T-cell (primary cell): ENCODE measurements at regions of chr2 and their contacts with region 1.

Region 1: DNA sequence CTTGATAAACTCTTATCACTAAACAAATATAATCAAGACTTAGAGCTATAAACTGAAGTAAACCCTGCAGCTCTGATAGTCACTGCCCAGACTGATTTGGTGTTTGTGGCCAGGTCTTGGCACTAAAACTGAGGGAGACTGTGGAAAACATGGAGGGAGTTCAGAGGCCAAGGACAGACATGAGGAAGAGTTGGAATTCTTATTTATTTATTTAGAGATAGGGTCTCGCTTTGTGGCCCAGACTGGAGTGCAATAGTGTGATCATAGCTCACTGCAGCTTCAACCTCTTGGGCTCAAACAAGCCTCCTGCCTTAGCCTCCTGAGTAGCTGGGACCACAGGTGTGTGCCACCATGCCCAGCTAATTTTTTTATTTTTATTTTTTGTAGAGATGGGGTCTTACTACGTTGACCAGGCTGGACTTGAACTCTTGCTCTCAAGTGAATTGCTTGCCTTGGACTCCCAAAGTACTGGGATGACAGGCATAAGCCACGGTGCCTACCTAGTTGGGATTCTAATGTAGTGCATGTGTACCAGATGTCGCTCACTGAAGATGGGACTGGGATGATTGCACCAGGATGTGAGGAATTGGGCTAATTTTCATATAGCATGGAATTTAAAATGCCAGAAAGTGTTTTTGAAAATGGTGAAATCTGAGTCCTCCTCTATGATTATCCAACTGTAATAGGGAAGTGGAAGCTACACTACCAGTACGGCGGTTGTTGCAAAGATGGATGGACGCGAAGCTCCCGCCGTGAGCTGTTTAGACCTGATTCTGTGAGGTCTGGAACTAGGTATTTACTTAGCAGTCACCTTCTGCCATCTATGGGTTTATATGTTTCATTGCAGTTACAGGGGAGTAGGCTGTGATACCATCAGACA is 52.7 kb upstream of the CTLA4 start:
- DNase-seq: peak in 33 of 35 experiments; percentile 27 to 82 (median 40)
- ATAC-seq: peak; percentile 76 to 95 (median 83)
- H3K4me3 ChIP-seq: peak overlapping the region in 1 of 2 donors; percentile 29
- H3K4me3 Mint-ChIP-seq: peak overlapping the region in 2 of 3 donors; percentile 61 to 64
- H3K27ac ChIP-seq: no peak overlapping the region
- H3K27ac Mint-ChIP-seq: peak overlapping the region; percentile 68 to 81
- H3K4me1 ChIP-seq: peaks cover 19 to 26% of the 10 kb centered on the region in 2 experiments
- H3K4me1 Mint-ChIP-seq: peaks cover 37 to 50% (median 48%) of the 10 kb centered on the region in 3 donors
- H3K27me3 ChIP-seq: no peaks in the 10 kb centered on the region
- H3K27me3 Mint-ChIP-seq: no peaks in the 10 kb centered on the region

Region 2: GRCh38 chr2:203484266-203485112 is 330.4 kb before region 1 on chr2:
- CTCF ChIA-PET with region 1: interaction called, 57 to 58 read pairs
- POLR2A ChIA-PET with region 1: interaction called in 1 of 2 experiments, 3 read pairs
- DNase-seq: peak; percentile 3 to 80 (median 46)
- ATAC-seq: peak; percentile 82 to 95 (median 94)
- H3K4me3 ChIP-seq: no peak overlapping the region
- H3K4me3 Mint-ChIP-seq: no peak overlapping the region
- H3K27ac ChIP-seq: no peak overlapping the region
- H3K27ac Mint-ChIP-seq: peak overlapping the region in 1 of 2 donors; percentile 40
- H3K4me1 ChIP-seq: peaks cover 3% of the 10 kb centered on the region in 2 experiments
- H3K4me1 Mint-ChIP-seq: peaks cover 6 to 7% (median 7%) of the 10 kb centered on the region in 3 donors
- H3K27me3 ChIP-seq: no peaks in the 10 kb centered on the region
- H3K27me3 Mint-ChIP-seq: no peaks in the 10 kb centered on the region

Region 3: GRCh38 chr2:203740780-203741281 is 74.1 kb before region 1 on chr2:
- CTCF ChIA-PET with region 1: interaction called, 4 to 14 read pairs
- POLR2A ChIA-PET with region 1: interaction called, 3 to 4 read pairs
- DNase-seq: peak in 25 of 35 experiments; percentile 21 to 85 (median 54)
- ATAC-seq: peak; percentile 86 to 90 (median 88)
- H3K4me3 ChIP-seq: peak overlapping the region in 1 of 2 donors; percentile 38
- H3K4me3 Mint-ChIP-seq: peak overlapping the region; percentile 59 to 69 (median 63)
- H3K27ac ChIP-seq: peak overlapping the region; percentile 79
- H3K27ac Mint-ChIP-seq: peak overlapping the region; percentile 90 to 91
- H3K4me1 ChIP-seq: peaks cover 62 to 74% of the 10 kb centered on the region in 2 experiments
- H3K4me1 Mint-ChIP-seq: peaks cover 85 to 91% (median 88%) of the 10 kb centered on the region in 3 donors
- H3K27me3 ChIP-seq: no peaks in the 10 kb centered on the region
- H3K27me3 Mint-ChIP-seq: no peaks in the 10 kb centered on the region

Region 4: GRCh38 chr2:204012072-204012653 is 197.3 kb after region 1 on chr2:
- CTCF ChIA-PET with region 1: no interaction called
- POLR2A ChIA-PET with region 1: no interaction called
- DNase-seq: no peak
- ATAC-seq: no peak
- H3K4me3 ChIP-seq: no peak overlapping the region
- H3K4me3 Mint-ChIP-seq: no peak overlapping the region
- H3K27ac ChIP-seq: no peak overlapping the region
- H3K27ac Mint-ChIP-seq: no peak overlapping the region
- H3K4me1 ChIP-seq: no peaks in the 10 kb centered on the region
- H3K4me1 Mint-ChIP-seq: peaks cover 36 to 54% (median 44%) of the 10 kb centered on the region in 3 donors
- H3K27me3 ChIP-seq: no peaks in the 10 kb centered on the region
- H3K27me3 Mint-ChIP-seq: no peaks in the 10 kb centered on the region